CD8-positive, alpha-beta T cell (primary cell): ENCODE measurements at regions of chr3 and their contacts with region 1.

Region 1: DNA sequence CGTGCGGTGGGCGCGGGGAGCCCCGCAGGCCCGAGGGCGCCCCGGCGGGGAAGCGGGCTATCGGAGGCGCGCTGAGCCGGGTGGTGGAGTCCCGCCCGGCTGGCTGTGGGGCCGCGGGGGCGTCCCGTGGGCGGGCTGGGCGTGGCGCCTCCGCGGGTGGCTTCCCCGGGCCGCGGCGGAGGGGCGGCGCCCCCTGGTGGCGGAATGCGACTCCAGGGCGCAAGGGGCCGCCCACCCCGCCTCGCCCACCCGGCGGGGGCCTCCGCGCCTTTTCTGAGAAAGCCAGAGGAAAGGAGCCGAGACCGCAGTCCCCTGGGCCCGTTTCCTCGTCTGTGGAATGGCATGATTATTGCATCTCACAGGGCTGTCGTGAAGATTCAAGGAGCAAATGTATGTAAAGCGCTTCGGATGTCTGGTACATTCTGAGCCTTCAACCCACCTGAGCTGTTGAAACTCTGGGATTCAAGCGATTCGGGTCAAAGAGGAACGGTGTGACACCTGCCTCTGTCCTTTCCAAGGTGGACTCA is 31.9 kb upstream of the RAB6B start:
- DNase-seq: peak; percentile 57 to 89 (median 79)
- ATAC-seq: peak; percentile 98
- H3K4me3 ChIP-seq: peak overlapping the region; percentile 43 to 67
- H3K4me3 Mint-ChIP-seq: peak overlapping the region; percentile 73
- H3K27ac ChIP-seq: no peak overlapping the region
- H3K27ac Mint-ChIP-seq: no peak overlapping the region
- H3K4me1 ChIP-seq: peaks cover 13% of the 10 kb centered on the region
- H3K4me1 Mint-ChIP-seq: peaks cover 14% of the 10 kb centered on the region
- H3K27me3 ChIP-seq: peaks cover 0 to 4% of the 10 kb centered on the region in 2 experiments
- H3K27me3 Mint-ChIP-seq: peaks cover 8% of the 10 kb centered on the region
- CTCF ChIP-seq: peak; percentile 76

Region 2: GRCh38 chr3:133283958-133284807 is 643.4 kb before region 1 on chr3:
- CTCF ChIA-PET with region 1: no interaction called
- POLR2A ChIA-PET with region 1: no interaction called
- intact Hi-C with region 1: loop called in 1 of 2 experiments (anchors 2 kb)
- DNase-seq: no peak
- ATAC-seq: no peak
- H3K4me3 ChIP-seq: no peak overlapping the region
- H3K4me3 Mint-ChIP-seq: no peak overlapping the region
- H3K27ac ChIP-seq: no peak overlapping the region
- H3K27ac Mint-ChIP-seq: no peak overlapping the region
- H3K4me1 ChIP-seq: no peaks in the 10 kb centered on the region
- H3K4me1 Mint-ChIP-seq: no peaks in the 10 kb centered on the region
- H3K27me3 ChIP-seq: no peaks in the 10 kb centered on the region
- H3K27me3 Mint-ChIP-seq: peaks cover 6% of the 10 kb centered on the region
- CTCF ChIP-seq: no peak

Region 3: DNA sequence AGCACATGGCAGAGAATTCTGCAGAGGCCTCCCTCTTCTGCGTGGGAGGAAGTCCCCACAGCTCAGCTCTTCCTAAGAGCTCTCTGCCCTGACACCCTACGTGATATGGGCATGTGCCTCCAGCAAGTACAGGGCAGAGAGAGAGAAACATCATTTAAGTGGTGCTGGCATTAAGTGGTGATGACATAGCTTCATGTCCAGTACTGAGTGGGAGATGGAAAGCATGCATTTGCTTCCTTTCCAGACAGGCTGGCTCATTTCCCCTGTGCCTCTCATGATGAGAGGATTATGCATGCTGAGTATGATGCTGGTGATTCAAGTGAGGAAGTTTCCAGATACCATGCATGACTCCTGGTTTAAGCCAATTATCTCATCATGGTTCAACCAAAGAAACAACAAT is 500.9 kb before region 1 on chr3:
- CTCF ChIA-PET with region 1: no interaction called
- POLR2A ChIA-PET with region 1: no interaction called
- intact Hi-C with region 1: loop called in 1 of 2 experiments (anchors 5 kb)
- DNase-seq: no peak
- ATAC-seq: no peak
- H3K4me3 ChIP-seq: no peak overlapping the region
- H3K4me3 Mint-ChIP-seq: no peak overlapping the region
- H3K27ac ChIP-seq: no peak overlapping the region
- H3K27ac Mint-ChIP-seq: no peak overlapping the region
- H3K4me1 ChIP-seq: no peaks in the 10 kb centered on the region
- H3K4me1 Mint-ChIP-seq: peaks cover 4% of the 10 kb centered on the region
- H3K27me3 ChIP-seq: no peaks in the 10 kb centered on the region
- H3K27me3 Mint-ChIP-seq: no peaks in the 10 kb centered on the region
- CTCF ChIP-seq: no peak

Region 4: DNA sequence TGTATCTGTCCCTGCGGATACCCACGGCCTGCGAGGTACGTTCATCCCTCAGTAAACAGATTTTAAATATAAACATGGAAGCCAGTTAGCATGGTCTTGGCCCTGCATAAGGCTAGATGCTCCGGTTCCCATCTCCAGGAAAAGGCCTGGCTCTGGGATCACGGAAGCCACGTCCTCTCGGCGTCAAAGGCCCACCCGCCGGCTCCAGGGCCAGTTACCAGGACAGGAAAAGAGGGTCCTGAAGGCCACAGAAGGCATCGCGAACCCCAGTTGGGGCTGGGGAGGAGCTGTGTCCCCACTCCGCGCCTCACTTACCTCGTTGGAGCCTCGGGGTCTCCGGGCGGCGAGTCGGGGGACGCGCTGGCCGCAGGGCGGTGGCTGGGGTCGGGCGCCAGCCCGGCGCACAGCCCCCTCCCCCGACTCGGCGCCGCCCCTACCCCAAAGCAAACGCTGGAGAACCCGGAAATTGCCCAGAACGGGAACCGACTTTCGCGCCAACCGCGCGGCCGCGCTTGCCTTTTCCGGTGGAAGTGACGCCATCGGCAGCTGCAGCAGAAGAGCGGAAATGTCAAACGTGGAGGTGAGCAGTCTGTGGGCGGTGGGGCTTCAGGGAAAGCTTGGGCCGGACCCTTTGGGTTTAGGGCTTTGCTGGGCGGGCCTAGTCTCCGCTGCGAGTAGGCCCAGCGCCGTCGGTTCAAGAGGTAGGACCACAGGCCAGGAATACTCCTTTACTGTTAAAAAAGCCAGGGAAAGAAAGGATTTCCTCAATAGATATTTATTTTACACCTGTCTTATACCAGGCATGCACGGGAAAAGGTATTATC is 265.9 kb before region 1 on chr3 and contains the start of gene TOPBP1:
- CTCF ChIA-PET with region 1: no interaction called
- POLR2A ChIA-PET with region 1: no interaction called
- intact Hi-C with region 1: loop called (anchors 1 kb)
- DNase-seq: peak; percentile 58 to 92 (median 87)
- ATAC-seq: peak; percentile 82
- H3K4me3 ChIP-seq: peak within 1 kb of the TSS; percentile 86 to 90
- H3K4me3 Mint-ChIP-seq: peak within 1 kb of the TSS; percentile 98
- H3K27ac ChIP-seq: peak within 1 kb of the TSS; percentile 83 to 85
- H3K27ac Mint-ChIP-seq: peak within 1 kb of the TSS; percentile 98
- H3K4me1 ChIP-seq: peaks cover 26% of the 10 kb centered on the region
- H3K4me1 Mint-ChIP-seq: peaks cover 45% of the 10 kb centered on the region
- H3K27me3 ChIP-seq: no peaks in the 10 kb centered on the region
- H3K27me3 Mint-ChIP-seq: no peaks in the 10 kb centered on the region
- CTCF ChIP-seq: no peak
- total RNA-seq, gene TOPBP1: 32.4 to 33.9 TPM

Region 5: DNA sequence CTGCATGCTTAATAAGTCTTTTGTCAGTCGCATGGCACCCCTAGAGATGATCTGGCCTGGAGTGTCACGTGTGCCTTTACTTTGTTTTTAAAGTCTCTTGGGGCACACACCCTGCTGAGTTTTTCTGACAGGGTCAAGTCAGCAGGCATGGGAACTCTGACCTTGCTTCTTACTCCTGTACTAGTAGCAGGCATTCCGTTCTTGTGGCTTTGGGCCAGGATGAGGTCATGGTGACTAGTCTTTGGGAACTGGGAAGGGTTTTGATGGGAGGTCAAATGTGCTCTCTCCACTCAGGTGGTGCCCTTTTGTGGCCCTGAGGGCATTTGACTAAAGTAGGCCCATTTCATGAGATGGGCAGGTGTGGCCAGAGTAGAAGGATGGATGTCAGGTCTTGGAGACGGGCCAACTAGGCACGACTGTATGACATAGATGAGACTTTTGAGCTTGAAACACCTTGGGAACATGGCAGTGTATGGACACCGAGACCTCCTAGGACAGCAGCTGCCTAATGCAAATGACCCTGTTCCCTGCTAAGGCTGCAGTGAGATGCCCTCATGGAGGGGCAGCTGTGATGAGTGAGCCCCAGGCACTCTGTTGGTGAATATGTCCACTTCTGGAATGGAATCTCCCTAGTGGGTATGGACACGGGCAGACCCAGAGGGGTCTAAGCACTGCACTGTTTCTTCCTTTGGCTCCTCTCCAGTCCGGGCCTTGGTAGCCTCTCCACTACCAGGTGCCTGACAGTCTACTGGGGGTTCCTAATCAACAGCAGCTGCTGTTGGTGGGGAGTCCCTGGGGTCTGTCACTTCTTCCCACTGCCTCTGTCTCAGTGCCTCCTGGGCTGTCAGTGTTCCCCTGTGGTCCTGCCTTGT is 105.6 kb before region 1 on chr3:
- CTCF ChIA-PET with region 1: interaction called, 15 read pairs
- POLR2A ChIA-PET with region 1: no interaction called
- intact Hi-C with region 1: loop called (anchors 1 kb)
- DNase-seq: no peak
- ATAC-seq: no peak
- H3K4me3 ChIP-seq: no peak overlapping the region
- H3K4me3 Mint-ChIP-seq: no peak overlapping the region
- H3K27ac ChIP-seq: no peak overlapping the region
- H3K27ac Mint-ChIP-seq: no peak overlapping the region
- H3K4me1 ChIP-seq: no peaks in the 10 kb centered on the region
- H3K4me1 Mint-ChIP-seq: peaks cover 5% of the 10 kb centered on the region
- H3K27me3 ChIP-seq: no peaks in the 10 kb centered on the region
- H3K27me3 Mint-ChIP-seq: no peaks in the 10 kb centered on the region
- CTCF ChIP-seq: no peak

Region 6: GRCh38 chr3:133857767-133858166 is 69.8 kb before region 1 on chr3:
- CTCF ChIA-PET with region 1: no interaction called
- POLR2A ChIA-PET with region 1: no interaction called
- intact Hi-C with region 1: no loop called
- DNase-seq: no peak
- ATAC-seq: no peak
- H3K4me3 ChIP-seq: no peak overlapping the region
- H3K4me3 Mint-ChIP-seq: no peak overlapping the region
- H3K27ac ChIP-seq: no peak overlapping the region
- H3K27ac Mint-ChIP-seq: no peak overlapping the region
- H3K4me1 ChIP-seq: no peaks in the 10 kb centered on the region
- H3K4me1 Mint-ChIP-seq: peaks cover 6% of the 10 kb centered on the region
- H3K27me3 ChIP-seq: no peaks in the 10 kb centered on the region
- H3K27me3 Mint-ChIP-seq: no peaks in the 10 kb centered on the region
- CTCF ChIP-seq: no peak

Region 7: DNA sequence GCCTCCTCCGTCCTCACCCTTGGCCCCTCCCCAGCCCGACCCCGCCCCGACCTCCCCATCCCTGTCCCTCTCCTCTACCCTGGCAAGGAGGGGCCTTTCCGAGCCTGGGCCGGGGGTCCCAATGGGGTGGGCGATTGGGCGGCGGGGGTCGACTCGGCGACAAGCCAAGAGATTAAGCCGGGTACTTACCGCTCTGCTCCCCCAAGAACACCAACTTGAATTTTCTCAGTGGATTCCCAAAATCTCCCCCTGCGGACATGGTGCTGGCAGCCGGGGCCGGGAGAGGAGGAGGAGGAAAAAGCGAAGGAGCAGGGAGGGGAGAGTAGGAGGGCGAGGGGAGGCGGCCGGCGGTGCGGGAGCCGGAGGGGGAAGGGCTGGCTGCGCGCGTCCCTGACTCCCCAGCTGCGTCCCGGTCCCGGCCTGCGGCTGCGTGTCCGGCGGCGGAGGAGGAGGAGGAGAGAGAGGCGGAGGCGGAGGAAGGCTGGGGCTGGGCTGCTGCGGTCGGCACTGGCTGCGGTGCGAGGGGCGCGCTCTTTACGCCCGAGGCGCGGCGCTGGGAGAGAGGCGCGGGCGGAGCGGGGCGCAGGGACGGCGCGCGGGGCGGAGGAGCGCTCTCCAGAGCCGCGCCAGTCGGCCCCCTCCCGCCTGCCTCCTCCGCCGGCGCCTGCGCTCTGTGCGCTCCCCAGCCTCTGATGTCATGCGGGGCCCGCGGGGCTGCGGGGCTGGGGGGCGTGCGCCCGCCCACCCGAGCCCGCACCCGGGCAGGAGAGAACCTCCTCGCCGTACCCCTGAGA is 32.2 kb before region 1 on chr3 and contains the start of gene RAB6B:
- CTCF ChIA-PET with region 1: no interaction called
- POLR2A ChIA-PET with region 1: no interaction called
- intact Hi-C with region 1: no loop called
- DNase-seq: peak in 2 of 9 experiments; percentile 16 to 52
- ATAC-seq: peak; percentile 57
- H3K4me3 ChIP-seq: no peak within 1 kb of the TSS
- H3K4me3 Mint-ChIP-seq: peak within 1 kb of the TSS; percentile 58
- H3K27ac ChIP-seq: no peak within 1 kb of the TSS
- H3K27ac Mint-ChIP-seq: no peak within 1 kb of the TSS
- H3K4me1 ChIP-seq: no peaks in the 10 kb centered on the region
- H3K4me1 Mint-ChIP-seq: peaks cover 10% of the 10 kb centered on the region
- H3K27me3 ChIP-seq: no peaks in the 10 kb centered on the region
- H3K27me3 Mint-ChIP-seq: peaks cover 41% of the 10 kb centered on the region
- CTCF ChIP-seq: no peak
- total RNA-seq, gene RAB6B: 1.1 to 1.3 TPM

Region 8: GRCh38 chr3:134106580-134106979 is 179.0 kb after region 1 on chr3:
- CTCF ChIA-PET with region 1: no interaction called
- POLR2A ChIA-PET with region 1: no interaction called
- intact Hi-C with region 1: no loop called
- DNase-seq: no peak
- ATAC-seq: no peak
- H3K4me3 ChIP-seq: no peak overlapping the region
- H3K4me3 Mint-ChIP-seq: no peak overlapping the region
- H3K27ac ChIP-seq: no peak overlapping the region
- H3K27ac Mint-ChIP-seq: no peak overlapping the region
- H3K4me1 ChIP-seq: no peaks in the 10 kb centered on the region
- H3K4me1 Mint-ChIP-seq: peaks cover 5% of the 10 kb centered on the region
- H3K27me3 ChIP-seq: no peaks in the 10 kb centered on the region
- H3K27me3 Mint-ChIP-seq: peaks cover 13% of the 10 kb centered on the region
- CTCF ChIP-seq: no peak